ENCODE measurements at regions of chr11 and their contacts with region 1.

Region 1: GRCh38 chr11:128472128-128473089 is 114.9 kb downstream of the ETS1 start:
- DNase-seq: peak; percentile 60
- CTCF ChIP-seq: no peak

Region 2: DNA sequence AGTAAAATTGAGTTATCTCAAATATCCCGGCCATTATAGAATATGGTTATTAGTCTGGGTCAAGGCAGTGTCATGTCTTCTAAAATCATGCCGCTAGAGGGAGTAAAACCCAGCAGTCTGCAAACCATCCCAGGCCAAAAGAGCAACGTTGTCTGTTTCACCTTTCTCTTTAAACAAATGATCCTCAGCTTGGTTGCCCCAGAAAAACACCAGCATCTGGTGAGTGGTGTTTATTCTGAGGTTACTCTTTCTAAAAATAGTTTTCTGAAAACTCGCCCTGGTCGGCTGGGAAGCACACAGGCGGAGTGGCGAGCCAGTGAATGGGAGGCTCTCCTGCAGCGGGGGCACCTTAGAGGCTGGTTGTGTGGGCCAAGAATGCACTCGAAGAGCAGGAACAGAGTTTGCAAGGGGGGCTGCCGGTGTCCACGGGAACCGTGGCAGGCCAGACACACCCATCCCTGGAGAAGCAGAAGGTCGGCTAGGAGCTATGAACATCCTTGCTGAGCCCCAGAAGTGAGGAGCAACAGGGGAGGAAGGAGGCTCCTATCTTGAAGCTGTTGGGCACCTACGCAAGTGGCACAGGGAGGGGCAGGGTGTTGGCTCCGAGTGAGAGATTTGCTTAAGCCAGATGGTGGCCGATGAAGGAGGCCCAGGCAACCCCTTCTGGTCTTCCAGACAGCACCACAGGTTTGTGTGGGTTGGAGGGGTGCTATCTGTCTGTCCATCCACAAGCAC is 182.1 kb before region 1 on chr11:
- in situ Hi-C with region 1: loop called (anchors 25 kb)
- DNase-seq: peak; percentile 58
- CTCF ChIP-seq: peak; percentile 71

Region 3: GRCh38 chr11:128412847-128413791 is 59.3 kb before region 1 on chr11:
- in situ Hi-C with region 1: no loop called
- DNase-seq: peak; percentile 25
- CTCF ChIP-seq: no peak

Region 4: GRCh38 chr11:128610721-128611617 is 138.6 kb after region 1 on chr11:
- in situ Hi-C with region 1: no loop called
- DNase-seq: peak; percentile 78
- CTCF ChIP-seq: no peak

Region 5: DNA sequence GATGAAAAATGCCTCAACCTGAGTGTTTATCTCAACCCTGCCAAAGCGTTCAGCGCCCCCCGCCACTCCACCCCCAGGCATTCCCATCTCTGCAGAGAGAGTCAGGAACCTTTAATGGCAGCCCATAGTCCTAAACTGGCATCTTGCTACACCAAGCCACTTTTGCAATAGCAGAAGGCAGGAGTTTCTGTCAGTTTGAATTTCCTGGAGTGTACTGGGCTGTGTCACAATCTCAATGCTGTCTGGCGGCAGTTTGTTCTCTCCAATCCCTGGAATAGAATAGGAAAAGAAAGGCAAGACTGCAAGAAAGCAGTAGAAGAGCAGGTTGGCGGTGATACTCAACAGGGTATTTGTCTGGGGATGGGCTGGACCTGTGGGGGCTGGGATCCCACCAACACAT is 188.5 kb after region 1 on chr11:
- in situ Hi-C with region 1: no loop called
- DNase-seq: no peak
- CTCF ChIP-seq: no peak

Measured in GM13977 (cell line).